ENCODE measurements at regions of chr13 and their contacts with region 1.

Region 1: DNA sequence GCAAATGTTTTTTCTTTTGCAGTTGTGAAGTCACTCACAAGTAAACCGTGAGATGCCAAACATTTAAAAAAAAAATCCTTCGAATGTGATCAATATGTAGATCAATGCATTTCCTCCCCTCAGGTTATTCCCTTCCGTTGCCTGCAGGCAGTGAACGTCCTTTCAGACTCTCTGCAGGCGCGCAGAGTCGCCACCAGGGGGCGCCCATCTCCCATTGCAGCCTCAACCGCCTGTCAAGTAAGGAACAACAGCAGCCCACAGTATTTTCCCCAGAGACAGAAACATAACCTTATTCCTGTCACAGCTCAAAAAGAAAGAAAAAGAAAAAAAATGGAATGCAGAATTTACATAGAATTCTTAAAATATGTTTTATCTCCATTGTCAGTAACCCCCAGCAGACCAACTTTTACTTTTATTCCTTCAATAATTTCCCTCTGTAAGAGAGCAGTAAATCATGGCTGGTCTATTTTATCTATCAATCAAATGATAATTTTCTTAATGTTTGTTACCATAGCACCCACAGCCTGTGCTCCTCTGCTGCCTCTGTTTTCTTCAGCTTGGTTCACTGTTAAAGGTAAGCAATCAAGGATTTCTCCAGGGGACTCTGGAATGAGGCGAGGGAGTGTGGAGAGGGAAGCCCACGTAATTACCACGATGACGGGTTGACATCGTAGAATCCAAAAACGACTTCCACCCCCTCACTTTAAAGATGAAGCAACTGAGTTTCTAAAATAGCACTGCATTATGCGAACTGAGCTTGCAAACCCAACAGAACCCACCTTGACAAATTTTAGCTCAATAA is 637.6 kb upstream of the ARGLU1 start:
- DNase-seq: peak; percentile 71
- H3K4me3 ChIP-seq: no peak overlapping the region
- H3K27ac ChIP-seq: no peak overlapping the region
- H3K4me1 ChIP-seq: peaks cover 24% of the 10 kb centered on the region
- H3K27me3 ChIP-seq: no peaks in the 10 kb centered on the region
- CTCF ChIP-seq: peak; percentile 90 to 97
- POLR2A ChIP-seq: no peak

Region 2: DNA sequence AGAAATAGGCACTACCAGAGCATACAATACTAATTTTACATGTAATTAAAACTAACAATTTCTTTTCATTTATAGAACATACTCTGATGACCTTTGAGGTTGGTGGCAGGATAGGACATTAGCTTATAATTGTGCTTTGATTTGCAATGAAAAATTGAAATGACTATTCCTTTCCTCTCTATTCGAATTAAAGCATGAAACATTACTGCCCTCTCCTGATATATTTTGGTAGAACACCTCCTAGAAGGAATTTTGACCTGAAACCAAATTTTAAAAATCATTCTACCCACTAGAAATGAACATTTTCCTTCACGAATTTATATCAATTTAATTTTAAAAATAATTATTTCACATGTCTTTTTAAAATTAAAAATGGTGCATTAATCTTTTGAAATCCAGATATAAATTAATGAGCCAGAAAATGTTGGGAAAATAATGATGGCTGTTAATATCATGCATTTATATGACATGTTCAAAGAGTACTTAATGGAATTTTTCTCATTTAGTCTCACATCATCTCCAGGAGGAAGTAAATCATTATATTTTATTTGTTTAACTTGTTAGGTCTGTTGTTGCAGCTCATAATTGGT is 81.3 kb before region 1 on chr13:
- CTCF ChIA-PET with region 1: interaction called, 6 read pairs
- POLR2A ChIA-PET with region 1: no interaction called
- dilution Hi-C with region 1: no loop called
- intact Hi-C with region 1: loop called (anchors 2 kb)
- DNase-seq: peak; percentile 54
- H3K4me3 ChIP-seq: no peak overlapping the region
- H3K27ac ChIP-seq: no peak overlapping the region
- H3K4me1 ChIP-seq: no peaks in the 10 kb centered on the region
- H3K27me3 ChIP-seq: no peaks in the 10 kb centered on the region
- CTCF ChIP-seq: peak; percentile 20 to 22
- POLR2A ChIP-seq: no peak

Region 3: GRCh38 chr13:107271227-107271626 is 65.7 kb after region 1 on chr13:
- CTCF ChIA-PET with region 1: no interaction called
- POLR2A ChIA-PET with region 1: no interaction called
- dilution Hi-C with region 1: no loop called
- intact Hi-C with region 1: loop called (anchors 1 kb)
- DNase-seq: peak; percentile 90
- H3K4me3 ChIP-seq: no peak overlapping the region
- H3K27ac ChIP-seq: peak overlapping the region; percentile 39
- H3K4me1 ChIP-seq: peaks cover 14% of the 10 kb centered on the region
- H3K27me3 ChIP-seq: no peaks in the 10 kb centered on the region
- CTCF ChIP-seq: no peak
- POLR2A ChIP-seq: no peak

Region 4: GRCh38 chr13:107450931-107451330 is 245.4 kb after region 1 on chr13:
- CTCF ChIA-PET with region 1: interaction called, 3 read pairs
- POLR2A ChIA-PET with region 1: no interaction called
- dilution Hi-C with region 1: no loop called
- intact Hi-C with region 1: loop called (anchors 1 kb)
- DNase-seq: peak; percentile 99
- H3K4me3 ChIP-seq: no peak overlapping the region
- H3K27ac ChIP-seq: peak overlapping the region; percentile 99
- H3K4me1 ChIP-seq: peaks cover 23% of the 10 kb centered on the region
- H3K27me3 ChIP-seq: no peaks in the 10 kb centered on the region
- CTCF ChIP-seq: peak in 1 of 2 donors; percentile 12
- POLR2A ChIP-seq: peak; percentile 74

Region 5: DNA sequence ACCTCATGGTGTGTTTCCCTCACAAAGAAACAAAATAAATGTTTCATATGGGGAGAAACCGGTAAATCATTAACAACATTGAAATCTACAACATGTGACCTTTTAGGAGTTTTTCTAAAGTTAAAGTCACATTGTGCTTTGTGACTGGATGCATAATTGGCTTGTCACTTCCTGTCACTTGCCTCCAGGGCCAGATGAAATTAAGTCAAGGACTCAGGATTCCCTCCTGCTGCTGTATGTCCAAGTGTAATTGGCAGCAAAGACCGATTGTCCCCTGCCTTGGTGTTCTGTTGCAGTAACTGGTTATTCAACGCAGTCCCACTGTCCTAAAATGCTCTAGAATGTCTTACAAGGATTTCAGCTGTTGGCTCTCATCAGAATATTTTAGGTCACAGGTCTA is 561.6 kb after region 1 on chr13:
- CTCF ChIA-PET with region 1: no interaction called
- POLR2A ChIA-PET with region 1: no interaction called
- dilution Hi-C with region 1: no loop called
- intact Hi-C with region 1: loop called (anchors 2 kb)
- DNase-seq: peak; percentile 39
- H3K4me3 ChIP-seq: no peak overlapping the region
- H3K27ac ChIP-seq: peak overlapping the region; percentile 70
- H3K4me1 ChIP-seq: peaks cover 23% of the 10 kb centered on the region
- H3K27me3 ChIP-seq: no peaks in the 10 kb centered on the region
- CTCF ChIP-seq: no peak
- POLR2A ChIP-seq: no peak

Region 6: GRCh38 chr13:108218044-108218974 is 1012.8 kb after region 1 on chr13 and contains the start of gene ABHD13:
- CTCF ChIA-PET with region 1: interaction called, 4 read pairs
- POLR2A ChIA-PET with region 1: no interaction called
- dilution Hi-C with region 1: no loop called
- intact Hi-C with region 1: loop called (anchors 1 kb)
- DNase-seq: peak; percentile 90
- H3K4me3 ChIP-seq: peak within 1 kb of the TSS; percentile 74 to 81 (median 74)
- H3K27ac ChIP-seq: peak within 1 kb of the TSS; percentile 85
- H3K4me1 ChIP-seq: peaks cover 18% of the 10 kb centered on the region
- H3K27me3 ChIP-seq: no peaks in the 10 kb centered on the region
- CTCF ChIP-seq: no peak
- POLR2A ChIP-seq: peak; percentile 73
- total RNA-seq, gene ABHD13: 6.2 and 7.2 TPM in 2 replicates

Measured in endothelial cell of umbilical vein (primary cell).